PC-9 (cell line): ENCODE measurements at regions of chr17 and their contacts with region 1.

Region 1: DNA sequence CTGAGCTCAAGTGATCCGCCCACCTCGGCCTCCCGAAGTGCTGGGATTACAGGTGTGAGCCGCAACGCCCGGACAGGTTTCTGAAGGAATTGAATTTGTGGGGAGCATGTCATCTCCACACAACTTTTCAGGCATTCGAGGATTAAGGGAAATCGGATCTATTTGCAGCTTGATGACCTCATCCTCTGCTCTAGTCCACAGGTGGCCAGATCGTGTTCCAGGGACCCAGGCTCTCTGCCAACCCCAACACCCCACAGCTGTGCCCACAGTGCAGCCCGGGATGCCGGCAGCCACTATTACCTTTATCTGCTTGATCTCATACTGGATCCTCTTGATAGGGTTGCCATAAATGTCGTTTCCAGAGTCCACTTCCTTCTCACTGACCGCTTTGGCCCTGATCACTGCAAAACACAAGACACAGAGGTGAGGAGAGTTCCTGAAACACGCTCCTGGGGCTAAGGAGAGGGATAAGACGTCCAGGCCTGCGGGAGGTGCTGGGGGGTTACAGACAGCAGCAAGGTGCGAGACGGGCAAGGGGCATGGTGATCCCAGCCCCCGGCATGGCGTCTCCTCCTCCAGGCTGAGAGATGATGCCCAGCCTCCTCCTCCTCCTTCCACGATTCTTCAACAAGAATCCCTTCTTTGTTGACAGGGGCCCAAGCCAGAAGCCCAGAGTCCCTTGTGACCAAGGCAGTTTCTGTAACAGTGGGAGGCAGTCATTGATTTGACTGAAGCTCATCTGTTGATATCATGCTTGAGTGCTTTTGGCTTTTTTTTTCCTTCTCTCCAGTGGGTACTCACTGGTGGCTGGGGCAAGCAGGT is 29.3 kb downstream of the CEP295NL start:
- DNase-seq: peak; percentile 91
- H3K4me3 ChIP-seq: no peak overlapping the region
- H3K27ac ChIP-seq: peak overlapping the region; percentile 56
- H3K4me1 ChIP-seq: peaks cover 34% of the 10 kb centered on the region
- H3K27me3 ChIP-seq: no peaks in the 10 kb centered on the region
- CTCF ChIP-seq: no peak

Region 2: DNA sequence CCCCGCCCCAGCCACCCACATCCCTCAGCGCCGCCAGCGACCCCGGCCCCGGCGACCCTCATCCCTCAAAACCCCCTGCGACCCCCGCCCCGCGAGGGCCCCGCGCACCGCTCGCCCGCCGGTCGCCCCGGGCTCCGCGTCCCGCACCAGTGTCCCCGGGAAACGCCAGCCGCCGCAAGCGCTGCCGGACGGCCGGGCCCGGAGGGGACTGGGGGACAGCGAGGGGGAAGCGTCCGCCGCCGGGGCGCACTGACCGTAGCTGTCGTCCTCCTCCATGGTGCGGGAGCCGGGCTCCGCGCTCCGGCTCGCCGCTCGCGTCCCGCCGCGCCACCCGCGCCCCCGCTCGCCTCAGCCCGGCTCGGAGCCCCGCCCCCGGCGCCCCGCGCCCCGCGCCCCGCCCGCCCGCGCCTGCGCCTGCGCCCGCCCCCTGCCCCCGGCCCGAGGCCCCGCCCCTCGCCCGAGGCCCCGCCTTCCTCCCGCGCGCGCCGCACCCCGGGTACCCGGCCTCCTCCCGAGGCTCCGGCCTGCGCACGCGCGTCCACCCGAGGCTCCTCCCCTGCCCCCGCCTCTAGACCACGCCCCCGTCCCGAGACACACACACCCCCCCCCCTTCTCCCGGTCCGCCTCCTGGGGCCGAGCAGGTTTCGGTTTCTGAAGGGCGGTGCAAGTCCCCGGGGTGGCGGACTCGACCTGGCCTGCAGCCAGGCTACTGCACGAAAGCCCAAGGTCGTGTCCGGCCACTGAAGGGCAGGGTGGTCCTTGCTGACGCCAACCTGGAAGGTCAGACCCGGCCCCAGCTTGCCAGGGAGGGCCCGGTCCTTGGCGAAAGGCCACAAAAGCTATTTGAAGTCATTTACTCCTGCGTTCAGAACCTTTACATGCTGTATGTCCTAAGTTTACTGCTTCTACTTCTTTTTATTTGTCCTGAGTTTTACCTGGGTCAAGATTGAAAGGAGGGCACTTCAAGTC is 91.5 kb before region 1 on chr17 and contains the start of gene CYTH1:
- CTCF ChIA-PET with region 1: no interaction called
- POLR2A ChIA-PET with region 1: no interaction called
- intact Hi-C with region 1: no loop called
- DNase-seq: peak; percentile 61 to 96
- H3K4me3 ChIP-seq: peak within 1 kb of the TSS; percentile 85
- H3K27ac ChIP-seq: peak within 1 kb of the TSS; percentile 84
- H3K4me1 ChIP-seq: no peaks in the 10 kb centered on the region
- H3K27me3 ChIP-seq: no peaks in the 10 kb centered on the region
- CTCF ChIP-seq: no peak
- total RNA-seq, gene CYTH1: 40.3 and 41.0 TPM in 2 replicates

Region 3: DNA sequence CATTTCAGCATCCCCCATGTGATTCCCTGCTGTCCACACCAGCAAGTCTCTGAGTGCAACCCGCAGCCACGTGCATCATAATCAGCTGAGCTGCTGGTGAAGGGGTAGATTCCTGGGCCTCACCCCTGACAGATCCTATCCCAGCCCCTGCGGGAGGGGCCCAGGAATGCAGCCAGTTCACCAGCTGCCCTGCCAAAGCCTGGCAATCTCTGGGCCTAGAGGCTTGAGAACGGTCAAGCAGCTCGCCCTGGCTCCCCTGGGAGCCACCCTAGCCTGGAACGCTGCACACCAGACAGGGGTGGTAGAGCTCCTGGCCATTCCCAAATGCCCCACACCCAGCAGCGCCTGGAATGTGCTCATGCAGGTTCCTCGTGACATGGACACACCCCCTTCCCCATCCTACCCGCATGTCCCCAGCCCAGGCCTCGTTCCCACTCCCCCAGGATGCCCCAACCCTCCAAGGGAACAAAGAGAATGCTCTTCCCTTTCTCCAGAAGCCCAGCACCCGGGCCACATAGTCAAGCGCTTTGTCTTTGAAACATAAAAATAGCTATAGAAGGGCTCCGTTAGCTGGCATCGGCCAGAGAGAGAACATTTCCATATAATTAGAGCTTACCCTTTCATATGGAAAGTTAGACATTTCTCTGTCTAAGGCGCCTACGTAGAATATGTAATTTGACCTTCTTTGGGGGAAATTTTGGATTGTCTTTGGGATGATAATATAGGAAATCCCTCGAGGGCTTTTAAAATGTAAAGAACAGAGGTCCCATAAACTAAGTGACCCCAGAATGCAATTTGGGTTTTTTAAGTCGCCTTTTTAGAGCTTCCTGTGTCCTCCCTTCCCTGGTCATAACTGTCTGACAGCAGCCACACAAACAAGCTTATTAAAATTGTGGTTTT is 25.9 kb after region 1 on chr17:
- CTCF ChIA-PET with region 1: interaction called, 11 read pairs
- POLR2A ChIA-PET with region 1: no interaction called
- intact Hi-C with region 1: loop called (anchors 1 kb)
- DNase-seq: peak; percentile 63 to 90
- H3K4me3 ChIP-seq: no peak overlapping the region
- H3K27ac ChIP-seq: no peak overlapping the region; the same call in 1 of the 2 replicates
- H3K4me1 ChIP-seq: peaks cover 14% of the 10 kb centered on the region
- H3K27me3 ChIP-seq: no peaks in the 10 kb centered on the region
- CTCF ChIP-seq: no peak

Region 4: DNA sequence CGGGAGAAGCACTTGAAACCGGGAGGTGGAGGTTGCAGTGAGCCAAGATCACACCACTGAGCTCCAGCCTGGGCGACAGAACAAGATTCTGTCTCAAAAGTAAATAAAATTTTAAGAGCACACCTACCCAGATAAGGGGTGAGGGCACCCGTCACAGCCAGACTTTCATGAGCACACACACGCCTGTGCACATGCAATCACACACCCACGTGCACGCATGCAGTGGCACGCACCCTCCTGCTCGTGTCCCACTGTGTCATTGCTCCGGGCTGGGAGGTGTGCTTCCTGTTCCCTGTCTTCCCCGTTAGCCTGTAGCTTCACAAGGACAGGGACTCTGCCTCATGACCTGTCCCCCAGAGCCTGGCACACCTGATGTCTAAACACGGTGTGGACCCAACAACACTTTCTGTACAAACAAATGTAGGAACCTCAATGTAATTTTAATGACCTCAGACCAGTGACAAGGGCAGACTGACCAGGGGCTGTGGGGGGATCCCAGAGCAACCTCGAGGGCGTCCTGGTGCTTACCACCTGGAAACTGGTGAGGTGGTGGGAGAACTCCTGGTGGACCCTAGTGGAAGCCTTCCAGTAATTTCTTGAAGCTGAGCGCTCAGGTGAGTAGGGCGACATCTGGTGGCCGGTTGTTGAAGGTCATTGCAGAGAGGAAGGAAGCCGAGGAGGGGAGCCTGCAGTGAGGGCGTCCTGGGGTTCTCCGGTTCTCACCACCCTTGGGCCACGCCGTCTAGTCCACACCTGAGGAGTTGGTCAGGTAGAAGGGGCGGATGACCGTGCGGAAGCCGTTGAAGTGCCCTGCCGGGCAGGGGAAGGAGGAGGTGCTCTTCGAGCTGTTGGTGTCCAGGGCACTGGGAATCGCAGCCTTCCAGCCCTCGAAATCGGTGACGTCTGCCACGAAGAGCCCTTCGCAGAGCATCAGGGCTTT is 97.4 kb after region 1 on chr17:
- CTCF ChIA-PET with region 1: no interaction called
- POLR2A ChIA-PET with region 1: no interaction called
- intact Hi-C with region 1: loop called (anchors 2 kb)
- DNase-seq: peak in 1 of 2 experiments; percentile 71
- H3K4me3 ChIP-seq: no peak overlapping the region
- H3K27ac ChIP-seq: no peak overlapping the region
- H3K4me1 ChIP-seq: no peaks in the 10 kb centered on the region
- H3K27me3 ChIP-seq: no peaks in the 10 kb centered on the region
- CTCF ChIP-seq: peak; percentile 86

Region 5: GRCh38 chr17:79413611-79414010 is 539.9 kb after region 1 on chr17:
- CTCF ChIA-PET with region 1: no interaction called
- POLR2A ChIA-PET with region 1: no interaction called
- intact Hi-C with region 1: no loop called
- DNase-seq: no peak
- H3K4me3 ChIP-seq: no peak overlapping the region
- H3K27ac ChIP-seq: no peak overlapping the region
- H3K4me1 ChIP-seq: no peaks in the 10 kb centered on the region
- H3K27me3 ChIP-seq: peaks cover 75% of the 10 kb centered on the region
- CTCF ChIP-seq: no peak